ENCODE measurements at regions of chr1 and their contacts with region 1.

Region 1: GRCh38 chr1:226121587-226122400 is 59.3 kb downstream of the H3-3A start:
- DNase-seq: peak in 1 of 2 experiments; percentile 85
- H3K4me3 ChIP-seq: peak overlapping the region; percentile 79
- H3K27ac ChIP-seq: peak overlapping the region; percentile 74
- H3K4me1 ChIP-seq: peaks cover 26% of the 10 kb centered on the region
- H3K27me3 ChIP-seq: no peaks in the 10 kb centered on the region
- CTCF ChIP-seq: peak; percentile 71

Region 2: GRCh38 chr1:225480825-225481434 is 640.9 kb before region 1 on chr1:
- CTCF ChIA-PET with region 1: interaction called, 3 read pairs
- POLR2A ChIA-PET with region 1: interaction called, 10 read pairs
- intact Hi-C with region 1: loop called (anchors 5 kb)
- DNase-seq: peak; percentile 59 to 81
- H3K4me3 ChIP-seq: no peak overlapping the region
- H3K27ac ChIP-seq: no peak overlapping the region
- H3K4me1 ChIP-seq: no peaks in the 10 kb centered on the region
- H3K27me3 ChIP-seq: no peaks in the 10 kb centered on the region
- CTCF ChIP-seq: peak; percentile 94

Region 3: GRCh38 chr1:226083302-226084101 is 38.3 kb before region 1 on chr1:
- CTCF ChIA-PET with region 1: interaction called, 3 read pairs
- POLR2A ChIA-PET with region 1: interaction called, 3 read pairs
- intact Hi-C with region 1: loop called (anchors 1 kb)
- DNase-seq: peak; percentile 68 to 96
- H3K4me3 ChIP-seq: peak overlapping the region; percentile 91
- H3K27ac ChIP-seq: peak overlapping the region; percentile 47
- H3K4me1 ChIP-seq: peaks cover 6% of the 10 kb centered on the region; the same call in 1 of the 2 replicates
- H3K27me3 ChIP-seq: no peaks in the 10 kb centered on the region
- CTCF ChIP-seq: no peak; the same call in 1 of the 2 replicates

Region 4: GRCh38 chr1:226186124-226187018 is 64.6 kb after region 1 on chr1 and contains the start of gene ACBD3:
- CTCF ChIA-PET with region 1: interaction called, 6 read pairs
- POLR2A ChIA-PET with region 1: no interaction called
- intact Hi-C with region 1: loop called (anchors 1 kb)
- DNase-seq: peak; percentile 76 to 82
- H3K4me3 ChIP-seq: peak within 1 kb of the TSS; percentile 98
- H3K27ac ChIP-seq: peak within 1 kb of the TSS; percentile 61
- H3K4me1 ChIP-seq: peaks cover 21% of the 10 kb centered on the region
- H3K27me3 ChIP-seq: no peaks in the 10 kb centered on the region
- CTCF ChIP-seq: no peak; the same call in 1 of the 2 replicates
- total RNA-seq, gene ACBD3: 39.3 and 46.4 TPM in 2 replicates

Region 5: DNA sequence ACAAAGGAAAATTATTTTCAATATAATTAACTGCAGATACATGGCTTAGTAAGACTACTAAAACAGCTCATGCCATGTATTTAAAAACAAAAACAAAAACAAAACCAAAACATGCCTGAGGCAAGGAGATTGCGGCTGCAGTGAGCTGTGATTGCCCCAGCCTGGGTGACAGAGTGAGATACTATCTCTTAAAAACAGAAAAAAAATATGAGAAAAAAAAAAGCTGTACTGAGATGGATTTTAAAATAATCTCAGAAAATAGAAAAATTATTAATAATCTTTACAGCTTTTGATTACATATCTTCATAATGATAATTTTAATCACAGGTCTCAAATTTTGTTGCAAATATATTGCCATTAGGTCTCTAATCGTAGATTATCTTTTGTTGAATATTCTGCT is 211.2 kb after region 1 on chr1:
- CTCF ChIA-PET with region 1: interaction called, 15 read pairs
- POLR2A ChIA-PET with region 1: interaction called, 15 read pairs
- intact Hi-C with region 1: loop called (anchors 2 kb)
- DNase-seq: peak in 1 of 2 experiments; percentile 29
- H3K4me3 ChIP-seq: peak overlapping the region; percentile 49
- H3K27ac ChIP-seq: no peak overlapping the region
- H3K4me1 ChIP-seq: peaks cover 12% of the 10 kb centered on the region
- H3K27me3 ChIP-seq: no peaks in the 10 kb centered on the region
- CTCF ChIP-seq: no peak

Region 6: GRCh38 chr1:226474443-226475141 is 352.8 kb after region 1 on chr1:
- CTCF ChIA-PET with region 1: no interaction called
- POLR2A ChIA-PET with region 1: no interaction called
- intact Hi-C with region 1: no loop called
- DNase-seq: no peak
- H3K4me3 ChIP-seq: no peak overlapping the region
- H3K27ac ChIP-seq: no peak overlapping the region
- H3K4me1 ChIP-seq: peaks cover 22% of the 10 kb centered on the region
- H3K27me3 ChIP-seq: peaks cover 16% of the 10 kb centered on the region; the same call in 1 of the 2 replicates
- CTCF ChIP-seq: no peak

Region 7: GRCh38 chr1:226547754-226548191 is 426.0 kb after region 1 on chr1:
- CTCF ChIA-PET with region 1: no interaction called
- POLR2A ChIA-PET with region 1: no interaction called
- intact Hi-C with region 1: loop called (anchors 5 kb)
- DNase-seq: peak; percentile 67 to 82
- H3K4me3 ChIP-seq: no peak overlapping the region
- H3K27ac ChIP-seq: no peak overlapping the region
- H3K4me1 ChIP-seq: no peaks in the 10 kb centered on the region
- H3K27me3 ChIP-seq: peaks cover 8% of the 10 kb centered on the region; the same call in 1 of the 2 replicates
- CTCF ChIP-seq: peak; percentile 85